ENCODE measurements at regions of chrX and their contacts with region 1.

Region 1: DNA sequence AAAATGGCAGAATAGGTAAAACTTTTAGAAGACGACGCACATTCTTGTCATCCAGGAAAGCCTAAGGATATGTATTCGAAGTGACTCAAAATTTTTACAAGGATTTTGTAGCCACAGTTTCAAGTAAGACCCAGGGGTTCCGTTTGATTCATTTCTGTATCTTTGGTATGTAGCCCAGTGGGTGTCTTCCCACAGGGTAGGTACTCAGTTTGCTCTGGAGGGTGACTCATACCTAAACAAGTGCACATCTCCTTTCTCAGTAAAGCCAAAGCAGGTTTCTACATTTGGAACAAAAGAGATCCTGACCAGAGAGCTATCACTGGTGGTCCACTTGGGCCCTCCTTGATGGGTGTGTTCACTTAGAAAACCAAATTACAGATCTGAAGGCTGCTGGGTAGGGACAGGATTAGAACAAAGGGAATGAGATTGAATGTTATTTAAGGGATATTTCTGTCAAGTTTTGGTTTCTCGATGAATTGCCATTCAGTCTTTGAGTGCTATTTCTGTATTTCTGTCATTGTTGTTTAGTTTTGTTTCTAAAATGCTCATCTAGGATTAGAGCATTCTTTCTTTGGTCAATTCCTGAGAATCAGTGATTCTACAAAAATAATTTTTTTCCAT is 56.1 kb downstream of the PLS3 start:
- DNase-seq: peak; percentile 50
- H3K4me3 Mint-ChIP-seq: no peak overlapping the region
- H3K27ac Mint-ChIP-seq: peak overlapping the region; percentile 66
- H3K4me1 Mint-ChIP-seq: peaks cover 5% of the 10 kb centered on the region
- H3K27me3 Mint-ChIP-seq: no peaks in the 10 kb centered on the region

Region 2: GRCh38 chrX:115547448-115547847 is 69.6 kb before region 1 on chrX:
- intact Hi-C with region 1: no loop called
- DNase-seq: no peak
- H3K4me3 Mint-ChIP-seq: no peak overlapping the region
- H3K27ac Mint-ChIP-seq: no peak overlapping the region
- H3K4me1 Mint-ChIP-seq: no peaks in the 10 kb centered on the region
- H3K27me3 Mint-ChIP-seq: no peaks in the 10 kb centered on the region

Region 3: DNA sequence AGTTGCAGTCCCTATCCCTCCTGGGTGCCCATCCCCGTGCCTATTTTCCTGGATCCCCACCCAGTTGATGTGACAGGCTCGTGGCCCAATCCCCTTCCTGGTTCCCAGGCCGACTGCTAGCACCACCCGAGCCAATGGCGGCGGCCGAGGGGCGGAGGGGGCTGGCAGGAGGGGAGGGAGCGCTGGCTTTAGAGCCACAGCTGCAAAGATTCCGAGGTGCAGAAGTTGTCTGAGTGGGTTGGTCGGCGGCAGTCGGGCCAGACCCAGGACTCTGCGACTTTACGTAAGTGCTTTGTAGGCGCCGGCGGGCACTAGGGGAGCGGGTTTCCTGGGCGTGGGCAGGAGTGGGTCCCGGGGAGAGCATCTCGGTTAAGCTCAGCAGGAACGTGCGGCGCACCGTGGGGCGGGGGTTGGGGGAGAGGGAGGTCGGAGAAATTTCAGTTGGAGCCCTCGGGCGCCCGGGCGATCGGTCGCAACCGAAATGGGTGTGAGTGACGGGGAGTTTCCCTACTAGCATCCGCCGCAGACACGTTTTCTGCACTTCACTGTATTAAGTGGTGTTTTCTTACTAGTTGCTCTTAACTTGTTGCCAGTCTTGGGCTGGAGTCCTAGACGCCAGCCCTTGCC is 56.0 kb before region 1 on chrX and contains the start of gene PLS3:
- intact Hi-C with region 1: loop called (anchors 5 kb)
- DNase-seq: peak; percentile 62
- H3K4me3 Mint-ChIP-seq: peak within 1 kb of the TSS; percentile 80
- H3K27ac Mint-ChIP-seq: peak within 1 kb of the TSS; percentile 56
- H3K4me1 Mint-ChIP-seq: no peaks in the 10 kb centered on the region
- H3K27me3 Mint-ChIP-seq: peaks cover 14% of the 10 kb centered on the region
- total RNA-seq, gene PLS3: 5.1 and 6.5 TPM in 2 replicates

Region 4: DNA sequence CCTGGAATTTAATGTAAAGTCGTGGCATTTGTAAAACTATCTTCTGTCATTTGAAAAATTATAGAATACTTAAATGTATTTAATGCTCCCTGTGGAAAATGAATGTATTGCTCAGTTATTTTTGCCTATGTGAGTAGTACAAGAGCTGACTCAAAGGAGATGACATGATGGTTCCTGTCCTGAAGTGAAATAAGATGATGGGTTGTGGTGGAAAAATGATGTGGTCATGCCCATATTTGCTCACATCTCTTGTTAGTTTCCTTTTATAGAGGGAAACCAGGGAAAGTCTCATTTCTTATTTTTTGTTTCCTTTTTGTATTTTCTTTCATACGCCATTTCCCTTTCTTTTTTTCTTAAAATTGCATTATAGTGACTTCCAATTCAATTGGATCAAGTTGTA is 32.4 kb before region 1 on chrX:
- intact Hi-C with region 1: loop called (anchors 1 kb)
- DNase-seq: no peak
- H3K4me3 Mint-ChIP-seq: no peak overlapping the region
- H3K27ac Mint-ChIP-seq: peak overlapping the region; percentile 44
- H3K4me1 Mint-ChIP-seq: peaks cover 4% of the 10 kb centered on the region
- H3K27me3 Mint-ChIP-seq: no peaks in the 10 kb centered on the region